Activated CD8-positive, alpha-beta T cell treated with anti-CD3 and anti-CD28 coated beads for 36 hours (primary cell): ENCODE measurements at regions of chr2 and their contacts with region 1.

Region 1: GRCh38 chr2:68121873-68122679 is 35.6 kb upstream of the PNO1 start:
- DNase-seq: peak; percentile 89
- ATAC-seq: peak; percentile 75
- H3K4me3 Mint-ChIP-seq: no peak overlapping the region
- H3K27ac Mint-ChIP-seq: no peak overlapping the region
- H3K4me1 Mint-ChIP-seq: peaks cover 2% of the 10 kb centered on the region
- H3K27me3 Mint-ChIP-seq: no peaks in the 10 kb centered on the region
- CTCF ChIP-seq: peak; percentile 97

Region 2: GRCh38 chr2:68134554-68134953 is 12.5 kb after region 1 on chr2:
- CTCF ChIA-PET with region 1: interaction called, 22 read pairs
- POLR2A ChIA-PET with region 1: no interaction called
- intact Hi-C with region 1: no loop called
- DNase-seq: no peak
- ATAC-seq: no peak
- H3K4me3 Mint-ChIP-seq: no peak overlapping the region
- H3K27ac Mint-ChIP-seq: no peak overlapping the region
- H3K4me1 Mint-ChIP-seq: peaks cover 2% of the 10 kb centered on the region
- H3K27me3 Mint-ChIP-seq: no peaks in the 10 kb centered on the region
- CTCF ChIP-seq: no peak

Region 3: GRCh38 chr2:68185541-68186164 is 63.6 kb after region 1 on chr2:
- CTCF ChIA-PET with region 1: interaction called, 11 read pairs
- POLR2A ChIA-PET with region 1: no interaction called
- intact Hi-C with region 1: no loop called
- DNase-seq: peak; percentile 75
- ATAC-seq: no peak
- H3K4me3 Mint-ChIP-seq: no peak overlapping the region
- H3K27ac Mint-ChIP-seq: peak overlapping the region; percentile 1
- H3K4me1 Mint-ChIP-seq: peaks cover 22% of the 10 kb centered on the region
- H3K27me3 Mint-ChIP-seq: no peaks in the 10 kb centered on the region
- CTCF ChIP-seq: peak; percentile 88

Region 4: GRCh38 chr2:68295516-68295915 is 173.4 kb after region 1 on chr2:
- CTCF ChIA-PET with region 1: interaction called, 41 read pairs
- POLR2A ChIA-PET with region 1: no interaction called
- intact Hi-C with region 1: no loop called
- DNase-seq: no peak
- ATAC-seq: no peak
- H3K4me3 Mint-ChIP-seq: no peak overlapping the region
- H3K27ac Mint-ChIP-seq: no peak overlapping the region
- H3K4me1 Mint-ChIP-seq: no peaks in the 10 kb centered on the region
- H3K27me3 Mint-ChIP-seq: peaks cover 7% of the 10 kb centered on the region
- CTCF ChIP-seq: no peak

Region 5: DNA sequence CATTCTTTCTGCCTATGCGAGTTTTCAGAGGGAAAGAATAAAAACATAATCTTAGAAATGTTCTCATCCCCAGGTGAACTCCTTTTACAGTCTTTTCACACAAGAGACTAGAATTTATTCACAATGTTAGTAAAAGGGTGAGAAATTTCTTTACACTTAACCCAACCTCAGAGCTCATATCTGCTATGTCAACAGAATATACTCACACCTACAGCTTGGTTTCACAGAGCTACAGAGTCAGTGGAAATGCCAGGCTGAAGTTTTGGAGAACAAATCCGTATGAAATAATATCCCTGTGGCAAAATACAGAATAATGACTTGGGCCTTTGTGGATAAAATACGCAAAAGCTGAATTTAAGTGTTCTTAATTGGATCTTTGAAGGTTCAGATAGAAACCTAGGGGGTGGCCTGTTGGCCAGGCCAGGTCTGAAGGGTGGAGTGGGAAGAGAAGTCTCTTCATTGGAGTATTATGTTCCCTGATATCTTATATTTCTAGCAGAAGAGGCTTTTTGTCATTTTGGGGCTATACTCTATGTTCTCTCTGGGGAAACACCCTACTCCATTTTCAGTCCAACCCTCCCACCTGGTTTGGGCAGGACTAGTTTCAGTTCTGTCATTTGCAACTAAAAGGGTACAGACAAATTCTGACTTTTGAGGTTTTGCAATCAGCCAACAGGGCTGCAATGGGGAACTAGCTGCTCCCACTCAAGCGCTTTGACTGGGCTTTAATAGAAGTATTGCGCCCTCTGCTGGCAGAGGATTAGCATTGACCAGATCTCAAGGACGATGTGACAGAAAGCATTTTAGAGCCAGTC is 319.3 kb after region 1 on chr2:
- CTCF ChIA-PET with region 1: interaction called, 34 read pairs
- POLR2A ChIA-PET with region 1: no interaction called
- intact Hi-C with region 1: no loop called
- DNase-seq: peak; percentile 93
- ATAC-seq: peak; percentile 98
- H3K4me3 Mint-ChIP-seq: no peak overlapping the region
- H3K27ac Mint-ChIP-seq: peak overlapping the region; percentile 81
- H3K4me1 Mint-ChIP-seq: peaks cover 16% of the 10 kb centered on the region
- H3K27me3 Mint-ChIP-seq: no peaks in the 10 kb centered on the region
- CTCF ChIP-seq: peak; percentile 89

Region 6: DNA sequence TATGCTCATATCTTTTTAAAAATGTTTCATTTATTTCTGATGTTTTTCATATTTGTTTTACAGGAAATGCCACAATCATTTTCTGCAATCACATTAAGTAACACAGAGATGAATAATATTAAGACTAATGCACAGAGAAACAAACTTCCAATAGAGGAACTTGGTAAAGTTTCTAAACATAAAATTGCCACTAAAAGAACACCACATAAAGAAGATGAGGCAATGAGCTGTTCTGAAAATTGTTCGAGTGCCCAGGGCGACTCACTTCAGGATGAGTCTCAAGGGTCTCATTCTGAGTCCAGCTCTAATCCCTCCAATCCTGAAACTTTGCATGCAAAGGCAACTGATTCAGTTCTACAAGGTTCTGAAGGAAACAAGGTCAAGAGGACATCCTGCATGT is 415.7 kb after region 1 on chr2:
- CTCF ChIA-PET with region 1: no interaction called
- POLR2A ChIA-PET with region 1: no interaction called
- intact Hi-C with region 1: no loop called
- DNase-seq: no peak
- ATAC-seq: no peak
- H3K4me3 Mint-ChIP-seq: no peak overlapping the region
- H3K27ac Mint-ChIP-seq: no peak overlapping the region
- H3K4me1 Mint-ChIP-seq: no peaks in the 10 kb centered on the region
- H3K27me3 Mint-ChIP-seq: no peaks in the 10 kb centered on the region
- CTCF ChIP-seq: no peak